Psoas muscle (tissue), 8 donors: ENCODE measurements at regions of chr5 and their contacts with region 1.

Region 1: GRCh38 chr5:142542906-142543305 is 143.0 kb downstream of the FGF1 start:
- DNase-seq: no peak
- ATAC-seq: peak in 3 of 4 donors; percentile 49 to 72 (median 58)
- H3K4me3 ChIP-seq: no peak overlapping the region
- H3K27ac ChIP-seq: peak overlapping the region; percentile 21
- H3K4me1 ChIP-seq: no peaks in the 10 kb centered on the region
- H3K27me3 ChIP-seq: no peaks in the 10 kb centered on the region
- CTCF ChIP-seq: peak; percentile 15

Region 2: DNA sequence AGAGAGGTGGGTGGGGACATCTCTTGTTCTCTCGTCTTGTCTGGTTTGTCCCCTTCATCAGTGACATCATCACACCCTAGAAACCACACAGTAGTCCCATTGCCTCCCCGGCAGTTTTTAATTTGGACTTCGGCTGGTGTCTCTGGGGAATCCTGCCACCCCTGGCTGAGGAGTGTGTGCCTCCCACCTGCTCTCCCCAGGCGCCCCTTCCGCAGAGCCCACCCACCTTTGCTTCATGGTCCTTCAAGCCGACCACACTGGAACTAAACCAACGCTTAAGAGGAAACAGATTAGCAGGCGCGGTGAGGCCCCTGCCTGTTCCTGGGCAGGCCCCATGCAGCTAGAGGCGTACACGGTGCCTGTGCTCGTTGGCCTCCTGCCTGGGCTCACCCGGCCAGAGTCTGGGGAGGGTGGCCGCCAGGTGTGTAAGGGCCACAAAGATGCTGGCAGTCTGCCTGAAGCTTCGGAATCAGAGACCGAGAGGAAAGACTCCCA is 110.5 kb before region 1 on chr5:
- intact Hi-C with region 1: loop called in 1 of 2 experiments (anchors 5 kb)
- DNase-seq: no peak
- ATAC-seq: no peak
- H3K4me3 ChIP-seq: no peak overlapping the region
- H3K27ac ChIP-seq: no peak overlapping the region
- H3K4me1 ChIP-seq: no peaks in the 10 kb centered on the region
- H3K27me3 ChIP-seq: no peaks in the 10 kb centered on the region
- CTCF ChIP-seq: no peak

Region 3: DNA sequence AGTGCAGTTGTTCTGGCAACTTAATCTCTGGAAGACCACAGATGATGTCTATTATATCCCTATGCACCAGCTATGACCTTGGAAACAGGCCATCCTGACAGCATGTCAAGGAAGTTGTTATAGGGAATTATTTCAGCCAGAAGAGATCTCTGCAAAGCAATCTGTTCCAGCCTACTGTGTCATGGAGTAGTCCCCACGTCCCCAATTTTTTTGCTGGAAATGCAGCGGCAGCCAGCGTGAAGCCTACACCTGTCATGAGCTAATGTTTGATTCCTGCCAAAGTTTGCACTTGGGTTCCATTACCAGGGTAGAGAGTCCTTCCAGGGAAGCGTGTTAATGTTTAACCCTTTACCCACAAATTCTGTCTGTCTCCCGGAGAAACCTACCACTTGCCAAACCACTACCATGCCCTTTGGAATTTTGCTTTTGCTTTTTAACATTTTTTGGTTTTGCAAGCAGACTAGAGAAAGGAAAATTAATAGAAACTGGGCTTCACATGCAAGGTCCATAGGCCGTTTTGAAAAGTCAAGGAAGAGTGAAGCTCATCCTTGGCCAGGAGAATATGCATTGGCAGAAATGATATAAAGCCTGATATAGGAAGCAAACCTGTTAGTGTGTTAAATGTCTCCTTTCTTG is 43.2 kb before region 1 on chr5:
- intact Hi-C with region 1: loop called in 1 of 2 experiments (anchors 5 kb)
- DNase-seq: no peak
- ATAC-seq: no peak
- H3K4me3 ChIP-seq: no peak overlapping the region
- H3K27ac ChIP-seq: no peak overlapping the region
- H3K4me1 ChIP-seq: no peaks in the 10 kb centered on the region
- H3K27me3 ChIP-seq: no peaks in the 10 kb centered on the region
- CTCF ChIP-seq: no peak

Region 4: GRCh38 chr5:143657647-143658285 is 1114.9 kb after region 1 on chr5:
- intact Hi-C with region 1: no loop called
- DNase-seq: no peak
- ATAC-seq: no peak
- H3K4me3 ChIP-seq: no peak overlapping the region
- H3K27ac ChIP-seq: no peak overlapping the region
- H3K4me1 ChIP-seq: no peaks in the 10 kb centered on the region
- H3K27me3 ChIP-seq: no peaks in the 10 kb centered on the region
- CTCF ChIP-seq: no peak